ENCODE measurements at regions of chr14 and their contacts with region 1.

Region 1: GRCh38 chr14:30656190-30656632 is 34.1 kb downstream of the SCFD1 start:
- DNase-seq: peak; percentile 26
- H3K4me3 Mint-ChIP-seq: no peak overlapping the region
- H3K27ac Mint-ChIP-seq: no peak overlapping the region
- H3K4me1 Mint-ChIP-seq: no peaks in the 10 kb centered on the region
- H3K27me3 Mint-ChIP-seq: no peaks in the 10 kb centered on the region

Region 2: DNA sequence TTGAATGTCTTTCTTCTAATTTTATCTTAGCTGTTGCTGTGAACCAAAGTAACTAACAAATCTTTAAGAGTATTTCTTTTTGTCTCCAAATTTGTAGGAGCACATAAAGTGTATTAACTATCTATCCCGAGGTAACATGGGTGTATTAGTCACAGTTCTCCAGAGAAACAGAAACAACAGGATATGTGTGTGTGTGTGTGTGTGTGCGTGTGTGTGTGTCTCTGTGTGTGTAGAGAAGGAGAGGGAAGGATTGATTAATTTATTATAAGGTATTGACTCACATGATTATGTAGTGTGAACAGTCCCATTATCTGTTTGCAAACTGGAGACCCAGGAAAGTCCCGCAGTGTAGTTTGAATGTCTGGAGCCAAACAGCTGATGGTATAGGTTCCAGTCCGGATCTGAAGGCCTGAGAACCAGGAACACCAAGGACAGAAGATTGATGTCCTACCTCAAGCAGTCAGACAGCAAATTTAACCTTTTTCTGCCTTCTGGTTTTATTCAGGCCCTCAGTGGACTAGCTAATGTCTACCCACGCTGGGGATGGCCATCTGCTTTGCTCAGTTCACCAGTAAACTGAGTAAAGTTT is 82.9 kb before region 1 on chr14:
- CTCF ChIA-PET with region 1: no interaction called
- POLR2A ChIA-PET with region 1: no interaction called
- intact Hi-C with region 1: no loop called
- DNase-seq: no peak
- H3K4me3 Mint-ChIP-seq: no peak overlapping the region
- H3K27ac Mint-ChIP-seq: no peak overlapping the region
- H3K4me1 Mint-ChIP-seq: peaks cover 75% of the 10 kb centered on the region
- H3K27me3 Mint-ChIP-seq: no peaks in the 10 kb centered on the region

Region 3: DNA sequence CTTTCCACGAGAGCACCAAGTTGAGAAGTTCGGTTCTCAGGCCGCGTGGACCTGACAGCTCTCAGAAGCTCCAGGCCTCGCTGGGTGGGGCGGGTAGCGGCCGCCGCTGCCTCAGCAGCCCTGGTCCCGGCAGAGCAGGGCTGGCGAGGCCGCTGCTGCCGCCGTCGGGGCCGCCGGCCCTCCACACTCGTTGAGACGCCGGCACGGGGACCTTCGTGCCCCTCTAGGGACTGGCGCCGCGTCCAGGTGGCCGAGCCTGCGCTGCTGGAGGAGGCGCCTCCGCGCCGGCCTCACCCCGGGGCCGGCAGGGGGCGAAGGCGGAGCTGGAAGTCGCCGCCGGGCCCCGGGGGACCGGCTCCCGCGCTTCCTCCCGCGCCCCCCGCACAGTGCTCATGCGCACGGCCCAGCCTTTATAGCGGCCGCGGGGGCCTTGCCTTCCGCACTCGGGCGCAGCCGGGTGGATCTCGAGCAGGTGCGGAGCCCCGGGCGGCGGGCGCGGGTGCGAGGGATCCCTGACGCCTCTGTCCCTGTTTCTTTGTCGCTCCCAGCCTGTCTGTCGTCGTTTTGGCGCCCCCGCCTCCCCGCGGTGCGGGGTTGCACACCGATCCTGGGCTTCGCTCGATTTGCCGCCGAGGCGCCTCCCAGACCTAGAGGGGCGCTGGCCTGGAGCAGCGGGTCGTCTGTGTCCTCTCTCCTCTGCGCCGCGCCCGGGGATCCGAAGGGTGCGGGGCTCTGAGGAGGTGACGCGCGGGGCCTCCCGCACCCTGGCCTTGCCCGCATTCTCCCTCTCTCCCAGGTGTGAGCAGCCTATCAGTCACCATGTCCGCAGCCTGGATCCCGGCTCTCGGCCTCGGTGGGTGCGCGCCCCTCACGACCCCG is 218.1 kb after region 1 on chr14 and contains the start of gene COCH:
- CTCF ChIA-PET with region 1: no interaction called
- POLR2A ChIA-PET with region 1: no interaction called
- intact Hi-C with region 1: loop called (anchors 10 kb)
- DNase-seq: peak; percentile 26
- H3K4me3 Mint-ChIP-seq: peak within 1 kb of the TSS; percentile 72
- H3K27ac Mint-ChIP-seq: no peak within 1 kb of the TSS
- H3K4me1 Mint-ChIP-seq: peaks cover 8% of the 10 kb centered on the region
- H3K27me3 Mint-ChIP-seq: peaks cover 43% of the 10 kb centered on the region
- total RNA-seq, gene COCH: 0.45 to 0.75 TPM

Region 4: GRCh38 chr14:30906752-30907658 is 250.8 kb after region 1 on chr14:
- CTCF ChIA-PET with region 1: interaction called, 3 read pairs
- POLR2A ChIA-PET with region 1: no interaction called
- intact Hi-C with region 1: loop called (anchors 2 kb)
- DNase-seq: no peak
- H3K4me3 Mint-ChIP-seq: no peak overlapping the region
- H3K27ac Mint-ChIP-seq: no peak overlapping the region
- H3K4me1 Mint-ChIP-seq: no peaks in the 10 kb centered on the region
- H3K27me3 Mint-ChIP-seq: no peaks in the 10 kb centered on the region